Heart right ventricle (tissue), 16 donors: ENCODE measurements at regions of chr17 and their contacts with region 1.

Region 1: DNA sequence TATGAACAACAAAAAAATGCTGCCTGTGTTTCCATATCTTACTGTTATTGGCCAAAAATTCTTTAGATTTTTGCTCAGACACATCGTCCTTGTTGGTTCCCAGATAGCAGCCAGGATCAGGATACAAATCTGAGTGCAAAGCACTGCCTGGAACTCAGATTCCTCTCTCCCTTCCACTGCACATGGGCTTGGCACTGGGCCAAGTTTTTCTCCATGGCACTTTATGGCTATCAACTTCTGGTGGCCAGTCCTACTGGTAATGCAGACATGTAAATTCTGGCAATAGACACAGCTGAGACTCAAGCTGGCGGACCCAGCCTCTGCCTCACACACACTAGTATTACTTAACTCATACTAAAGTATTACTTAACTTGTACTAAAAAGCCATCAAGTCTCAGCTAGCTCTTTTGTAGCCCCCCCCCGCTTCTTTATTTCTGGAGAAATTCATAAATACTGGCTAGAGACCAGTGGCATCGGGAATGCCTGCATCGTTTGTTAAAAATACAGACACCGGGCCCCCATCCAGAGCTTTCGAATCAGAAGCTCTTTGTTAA is 181.2 kb upstream of the COX10 start:
- DNase-seq: peak in 1 of 2 donors; percentile 24
- ATAC-seq: peak in 1 of 8 donors; percentile 42
- H3K4me3 ChIP-seq: no peak overlapping the region
- H3K27ac ChIP-seq: no peak overlapping the region
- H3K4me1 ChIP-seq: peaks cover 0 to 26% (median 4%) of the 10 kb centered on the region in 9 donors
- H3K27me3 ChIP-seq: no peaks in the 10 kb centered on the region
- CTCF ChIP-seq: no peak

Region 2: GRCh38 chr17:13776027-13776588 is 112.0 kb before region 1 on chr17:
- intact Hi-C with region 1: loop called in 1 of 10 experiments (anchors 10 kb)
- DNase-seq: peak; percentile 10 to 13
- ATAC-seq: peak; percentile 49 to 96 (median 92)
- H3K4me3 ChIP-seq: no peak overlapping the region
- H3K27ac ChIP-seq: peak overlapping the region in 6 of 10 donors; percentile 0 to 75 (median 65)
- H3K4me1 ChIP-seq: peaks cover 0 to 8% (median 0%) of the 10 kb centered on the region in 9 donors
- H3K27me3 ChIP-seq: no peaks in the 10 kb centered on the region
- CTCF ChIP-seq: no peak

Region 3: GRCh38 chr17:13792314-13792713 is 95.8 kb before region 1 on chr17:
- intact Hi-C with region 1: loop called in 1 of 10 experiments (anchors 10 kb)
- DNase-seq: peak in 1 of 2 donors; percentile 15
- ATAC-seq: peak; percentile 67 to 99 (median 91)
- H3K4me3 ChIP-seq: no peak overlapping the region
- H3K27ac ChIP-seq: peak overlapping the region in 9 of 10 donors; percentile 31 to 79 (median 69)
- H3K4me1 ChIP-seq: peaks cover 0 to 8% (median 0%) of the 10 kb centered on the region in 9 donors
- H3K27me3 ChIP-seq: no peaks in the 10 kb centered on the region
- CTCF ChIP-seq: no peak

Region 4: DNA sequence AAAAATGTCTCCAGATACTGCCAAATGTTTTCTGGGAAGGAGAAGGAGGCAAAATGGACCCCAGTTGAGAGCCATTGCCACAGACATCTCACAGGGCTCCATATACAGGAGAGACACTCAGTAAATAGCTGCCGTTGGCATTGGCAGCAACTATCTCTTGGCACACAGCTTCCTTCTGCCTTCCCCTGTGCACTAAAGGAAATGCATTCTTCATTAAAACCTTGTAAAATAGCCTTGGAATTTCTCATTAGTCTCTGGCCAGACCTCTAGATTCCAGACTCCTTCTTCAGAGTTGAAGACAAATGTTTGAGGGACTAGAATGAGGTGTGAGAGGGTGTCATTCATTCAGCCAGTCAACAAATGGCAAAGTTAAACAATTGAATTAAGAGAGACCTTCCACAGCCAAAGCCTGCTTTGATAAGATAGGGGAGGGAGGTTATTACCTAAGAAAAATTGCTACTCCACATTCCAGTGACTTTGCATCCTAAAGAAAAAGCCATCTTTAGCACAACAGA is 62.5 kb before region 1 on chr17:
- intact Hi-C with region 1: no loop called
- DNase-seq: no peak
- ATAC-seq: no peak
- H3K4me3 ChIP-seq: no peak overlapping the region
- H3K27ac ChIP-seq: no peak overlapping the region
- H3K4me1 ChIP-seq: no peaks in the 10 kb centered on the region
- H3K27me3 ChIP-seq: no peaks in the 10 kb centered on the region
- CTCF ChIP-seq: no peak

Region 5: GRCh38 chr17:14061666-14062560 is 173.8 kb after region 1 on chr17:
- intact Hi-C with region 1: no loop called
- DNase-seq: no peak
- ATAC-seq: peak in 7 of 8 donors; percentile 52 to 96 (median 69)
- H3K4me3 ChIP-seq: no peak overlapping the region
- H3K27ac ChIP-seq: peak overlapping the region in 2 of 10 donors; percentile 0 to 31
- H3K4me1 ChIP-seq: peaks cover 0 to 16% (median 9%) of the 10 kb centered on the region in 9 donors
- H3K27me3 ChIP-seq: no peaks in the 10 kb centered on the region
- CTCF ChIP-seq: no peak

Region 6: DNA sequence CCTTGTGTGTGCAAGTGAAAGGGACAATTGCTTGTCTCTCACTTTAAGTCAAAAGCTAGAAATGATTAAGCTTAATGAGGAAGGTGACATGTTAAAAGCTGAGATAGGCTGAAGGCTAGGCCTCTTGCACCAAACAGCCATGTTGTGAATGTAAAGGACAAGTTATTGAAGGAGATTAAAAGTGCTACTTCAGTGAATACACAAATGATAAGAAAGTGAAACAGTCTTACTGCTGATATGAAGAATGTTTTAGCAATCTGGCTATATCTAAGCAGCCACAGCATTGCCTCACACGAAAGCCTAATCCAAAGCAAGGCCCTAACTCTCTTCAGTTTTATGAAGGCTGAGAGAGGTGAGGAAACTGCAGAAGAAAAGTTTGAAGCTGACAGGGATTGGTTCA is 277.5 kb after region 1 on chr17:
- intact Hi-C with region 1: no loop called
- DNase-seq: no peak
- ATAC-seq: no peak
- H3K4me3 ChIP-seq: no peak overlapping the region
- H3K27ac ChIP-seq: no peak overlapping the region
- H3K4me1 ChIP-seq: peaks cover 0 to 9% (median 0%) of the 10 kb centered on the region in 9 donors
- H3K27me3 ChIP-seq: no peaks in the 10 kb centered on the region
- CTCF ChIP-seq: no peak

Region 7: DNA sequence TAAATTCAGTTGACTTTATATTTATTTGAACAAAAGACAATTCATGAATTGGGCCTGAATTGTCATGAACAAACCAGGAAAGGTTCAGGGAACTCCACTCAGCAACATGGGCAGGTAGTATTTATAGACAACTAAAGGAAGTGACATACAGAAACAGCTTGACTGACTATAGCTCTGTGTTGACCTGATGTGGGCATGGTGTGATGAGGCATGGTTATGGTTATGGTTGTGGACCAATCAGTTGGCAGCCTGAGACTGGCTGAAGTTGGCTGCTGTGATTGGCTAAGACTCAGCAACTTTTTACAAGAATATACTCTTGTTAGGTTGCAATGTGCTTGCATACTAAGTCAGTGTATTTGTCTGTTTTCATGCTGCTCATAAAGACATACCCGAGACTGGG is 521.2 kb after region 1 on chr17:
- intact Hi-C with region 1: no loop called
- DNase-seq: no peak
- ATAC-seq: no peak
- H3K4me3 ChIP-seq: no peak overlapping the region
- H3K27ac ChIP-seq: no peak overlapping the region
- H3K4me1 ChIP-seq: no peaks in the 10 kb centered on the region
- H3K27me3 ChIP-seq: no peaks in the 10 kb centered on the region
- CTCF ChIP-seq: no peak